Ascending aorta (tissue), 2 donors: ENCODE measurements at regions of chr1 and their contacts with region 1.

Region 1: DNA sequence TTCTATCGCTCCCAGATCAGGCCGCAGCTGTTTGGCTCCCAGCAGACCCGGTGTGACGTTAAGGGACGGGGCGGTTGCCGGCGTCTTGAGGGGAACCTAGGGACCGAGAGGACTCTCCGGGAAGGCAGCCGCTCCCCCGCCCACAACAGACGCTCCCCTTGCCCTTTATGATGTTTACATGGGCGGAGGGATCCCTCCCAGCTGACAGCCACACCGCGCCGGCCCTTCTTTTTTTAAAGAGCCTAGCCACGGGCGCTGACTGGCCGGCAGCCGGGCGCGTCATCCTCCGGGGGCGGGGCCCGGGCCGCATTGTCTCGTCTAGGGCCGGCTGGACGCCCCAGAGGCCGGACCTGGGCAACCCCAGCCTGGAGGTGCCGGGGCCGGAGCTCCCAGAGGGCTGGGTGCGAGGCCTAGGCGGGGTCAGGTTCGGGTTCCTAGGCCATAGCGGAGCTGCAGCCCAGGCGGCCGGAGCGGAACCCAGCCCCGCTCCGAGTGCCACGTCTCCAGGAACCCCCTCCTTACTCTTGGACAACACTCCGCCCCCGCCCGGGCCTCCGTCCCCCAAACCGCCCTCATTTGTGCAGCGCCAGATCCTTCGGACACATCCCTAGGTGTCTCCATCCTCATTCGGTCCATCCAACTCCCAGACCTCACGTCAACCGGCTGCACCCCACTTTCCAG is at the start of gene PCAT6:
- DNase-seq: peak; percentile 78 to 96
- H3K4me3 ChIP-seq: peak within 1 kb of the TSS; percentile 73 to 74
- H3K27ac ChIP-seq: peak within 1 kb of the TSS; percentile 38 to 51
- H3K4me1 ChIP-seq: peaks cover 0 to 6% of the 10 kb centered on the region in 2 donors
- H3K27me3 ChIP-seq: no peaks in the 10 kb centered on the region
- CTCF ChIP-seq: no peak
- total RNA-seq, gene PCAT6: not detected

Region 2: GRCh38 chr1:202728951-202729350 is 81.8 kb before region 1 on chr1:
- intact Hi-C with region 1: no loop called
- DNase-seq: no peak
- H3K4me3 ChIP-seq: no peak overlapping the region
- H3K27ac ChIP-seq: no peak overlapping the region
- H3K4me1 ChIP-seq: no peaks in the 10 kb centered on the region
- H3K27me3 ChIP-seq: no peaks in the 10 kb centered on the region
- CTCF ChIP-seq: no peak

Region 3: GRCh38 chr1:202861420-202862200 is 50.9 kb after region 1 on chr1:
- intact Hi-C with region 1: loop called (anchors 2 kb)
- DNase-seq: peak; percentile 72 to 95
- H3K4me3 ChIP-seq: peak overlapping the region; percentile 72 to 89
- H3K27ac ChIP-seq: no peak overlapping the region
- H3K4me1 ChIP-seq: peaks cover 3 to 5% of the 10 kb centered on the region in 2 donors
- H3K27me3 ChIP-seq: no peaks in the 10 kb centered on the region
- CTCF ChIP-seq: no peak

Region 4: GRCh38 chr1:202888531-202889360 is 78.0 kb after region 1 on chr1 and contains the start of gene RABIF:
- intact Hi-C with region 1: loop called (anchors 2 kb)
- DNase-seq: peak; percentile 84 to 97
- H3K4me3 ChIP-seq: peak within 1 kb of the TSS; percentile 75 to 79
- H3K27ac ChIP-seq: peak within 1 kb of the TSS; percentile 78 to 94
- H3K4me1 ChIP-seq: peaks cover 0 to 13% of the 10 kb centered on the region in 2 donors
- H3K27me3 ChIP-seq: no peaks in the 10 kb centered on the region
- CTCF ChIP-seq: peak in 1 of 3 experiments; percentile 20
- total RNA-seq, gene RABIF: 1.9 TPM

Region 5: GRCh38 chr1:202957733-202958543 is 147.2 kb after region 1 on chr1 and contains the start of gene ADIPOR1:
- intact Hi-C with region 1: loop called (anchors 2 kb)
- DNase-seq: peak; percentile 59 to 94
- H3K4me3 ChIP-seq: peak within 1 kb of the TSS; percentile 80 to 94
- H3K27ac ChIP-seq: peak within 1 kb of the TSS; percentile 95 to 96
- H3K4me1 ChIP-seq: peaks cover 3 to 21% of the 10 kb centered on the region in 2 donors
- H3K27me3 ChIP-seq: no peaks in the 10 kb centered on the region
- CTCF ChIP-seq: peak in 2 of 3 experiments; percentile 17 to 29
- total RNA-seq, gene ADIPOR1: 67.9 TPM

Region 6: GRCh38 chr1:202968840-202969295 is 158.1 kb after region 1 on chr1:
- intact Hi-C with region 1: loop called (anchors 2 kb)
- DNase-seq: peak; percentile 41 to 76
- H3K4me3 ChIP-seq: peak overlapping the region in 1 of 2 donors; percentile 99
- H3K27ac ChIP-seq: peak overlapping the region; percentile 94 to 99
- H3K4me1 ChIP-seq: peaks cover 4 to 19% of the 10 kb centered on the region in 2 donors
- H3K27me3 ChIP-seq: no peaks in the 10 kb centered on the region
- CTCF ChIP-seq: peak; percentile 42 to 54 (median 46)

Region 7: DNA sequence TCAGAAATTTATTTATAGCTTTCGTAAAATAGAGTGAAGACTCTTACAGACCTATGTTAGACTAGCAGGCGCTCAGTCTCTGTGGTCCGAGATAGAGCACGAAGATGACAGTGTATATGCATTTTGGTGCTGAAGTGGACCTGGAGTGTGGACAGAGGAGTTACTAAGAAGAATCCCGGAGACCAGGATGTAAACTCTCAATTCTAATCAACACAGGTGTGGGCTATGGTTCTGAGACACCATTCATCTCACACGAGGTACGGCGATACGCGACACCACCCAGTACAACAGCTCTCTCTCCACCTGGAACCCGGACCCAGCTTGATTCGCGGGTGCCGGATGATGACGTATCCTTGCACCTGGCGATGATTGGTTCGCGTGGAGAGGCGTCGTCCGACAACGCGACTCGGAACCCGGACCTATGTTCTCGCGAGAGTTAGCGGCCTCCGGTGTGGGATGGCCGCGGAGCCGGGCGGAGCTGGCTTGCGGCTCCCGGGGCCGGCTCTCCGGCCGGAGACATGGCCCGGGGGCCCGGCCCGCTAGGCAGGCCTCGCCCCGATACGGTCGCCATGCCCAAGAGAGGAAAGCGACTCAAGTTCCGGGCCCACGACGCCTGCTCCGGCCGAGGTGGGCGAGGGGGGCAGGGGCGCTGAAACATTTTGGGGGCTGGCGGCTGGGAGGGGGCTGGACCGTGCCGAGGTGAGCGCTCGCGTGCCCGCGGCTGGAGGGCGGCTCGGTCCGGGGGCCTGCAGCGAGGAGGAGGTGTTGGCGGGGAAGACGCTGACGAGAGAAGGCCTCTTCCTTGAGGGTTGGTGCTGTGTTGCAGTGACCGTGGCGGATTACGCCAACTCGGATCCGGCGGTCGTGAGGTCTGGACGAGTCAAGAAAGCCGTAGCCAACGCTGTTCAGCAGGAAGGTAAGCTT is 196.5 kb after region 1 on chr1 and contains the start of gene TMEM183A:
- intact Hi-C with region 1: loop called (anchors 2 kb)
- DNase-seq: peak; percentile 83 to 97
- H3K4me3 ChIP-seq: peak within 1 kb of the TSS; percentile 78 to 89
- H3K27ac ChIP-seq: peak within 1 kb of the TSS; percentile 79 to 95
- H3K4me1 ChIP-seq: peaks cover 6 to 14% of the 10 kb centered on the region in 2 donors
- H3K27me3 ChIP-seq: no peaks in the 10 kb centered on the region
- CTCF ChIP-seq: no peak
- total RNA-seq, gene TMEM183A: 44.6 TPM